ENCODE measurements at regions of chr1 and their contacts with region 1.

Region 1: GRCh38 chr1:179190861-179191260 is 38.6 kb downstream of the ABL2 start:
- DNase-seq: no peak
- H3K4me3 Mint-ChIP-seq: no peak overlapping the region
- H3K27ac Mint-ChIP-seq: no peak overlapping the region
- H3K4me1 Mint-ChIP-seq: peaks cover 20% of the 10 kb centered on the region
- H3K27me3 Mint-ChIP-seq: no peaks in the 10 kb centered on the region

Region 2: GRCh38 chr1:179121159-179121938 is 69.5 kb before region 1 on chr1:
- CTCF ChIA-PET with region 1: interaction called, 17 read pairs
- intact Hi-C with region 1: loop called (anchors 1 kb)
- DNase-seq: peak; percentile 64
- H3K4me3 Mint-ChIP-seq: no peak overlapping the region
- H3K27ac Mint-ChIP-seq: no peak overlapping the region
- H3K4me1 Mint-ChIP-seq: peaks cover 3% of the 10 kb centered on the region
- H3K27me3 Mint-ChIP-seq: no peaks in the 10 kb centered on the region

Region 3: GRCh38 chr1:179129702-179130473 is 61.0 kb before region 1 on chr1:
- CTCF ChIA-PET with region 1: interaction called, 4 read pairs
- intact Hi-C with region 1: loop called (anchors 2 kb)
- DNase-seq: peak; percentile 24
- H3K4me3 Mint-ChIP-seq: peak overlapping the region; percentile 60
- H3K27ac Mint-ChIP-seq: peak overlapping the region; percentile 87
- H3K4me1 Mint-ChIP-seq: peaks cover 37% of the 10 kb centered on the region
- H3K27me3 Mint-ChIP-seq: no peaks in the 10 kb centered on the region

Region 4: GRCh38 chr1:179208681-179209477 is 18.0 kb after region 1 on chr1:
- CTCF ChIA-PET with region 1: no interaction called
- intact Hi-C with region 1: no loop called
- DNase-seq: no peak
- H3K4me3 Mint-ChIP-seq: no peak overlapping the region
- H3K27ac Mint-ChIP-seq: no peak overlapping the region
- H3K4me1 Mint-ChIP-seq: peaks cover 24% of the 10 kb centered on the region
- H3K27me3 Mint-ChIP-seq: no peaks in the 10 kb centered on the region

Measured in activated naive CD4-positive, alpha-beta T cell treated with anti-CD3 and anti-CD28 coated beads for 36 hours (primary cell).